Activated CD8-positive, alpha-beta T cell treated with anti-CD3 and anti-CD28 coated beads for 36 hours (primary cell): ENCODE measurements at regions of chr2 and their contacts with region 1.

Region 1: GRCh38 chr2:70919672-70920366 is 15.9 kb upstream of the ATP6V1B1 start:
- DNase-seq: peak; percentile 84
- ATAC-seq: peak; percentile 90
- H3K4me3 Mint-ChIP-seq: no peak overlapping the region
- H3K27ac Mint-ChIP-seq: no peak overlapping the region
- H3K4me1 Mint-ChIP-seq: no peaks in the 10 kb centered on the region
- H3K27me3 Mint-ChIP-seq: peaks cover 17% of the 10 kb centered on the region
- CTCF ChIP-seq: peak; percentile 90

Region 2: DNA sequence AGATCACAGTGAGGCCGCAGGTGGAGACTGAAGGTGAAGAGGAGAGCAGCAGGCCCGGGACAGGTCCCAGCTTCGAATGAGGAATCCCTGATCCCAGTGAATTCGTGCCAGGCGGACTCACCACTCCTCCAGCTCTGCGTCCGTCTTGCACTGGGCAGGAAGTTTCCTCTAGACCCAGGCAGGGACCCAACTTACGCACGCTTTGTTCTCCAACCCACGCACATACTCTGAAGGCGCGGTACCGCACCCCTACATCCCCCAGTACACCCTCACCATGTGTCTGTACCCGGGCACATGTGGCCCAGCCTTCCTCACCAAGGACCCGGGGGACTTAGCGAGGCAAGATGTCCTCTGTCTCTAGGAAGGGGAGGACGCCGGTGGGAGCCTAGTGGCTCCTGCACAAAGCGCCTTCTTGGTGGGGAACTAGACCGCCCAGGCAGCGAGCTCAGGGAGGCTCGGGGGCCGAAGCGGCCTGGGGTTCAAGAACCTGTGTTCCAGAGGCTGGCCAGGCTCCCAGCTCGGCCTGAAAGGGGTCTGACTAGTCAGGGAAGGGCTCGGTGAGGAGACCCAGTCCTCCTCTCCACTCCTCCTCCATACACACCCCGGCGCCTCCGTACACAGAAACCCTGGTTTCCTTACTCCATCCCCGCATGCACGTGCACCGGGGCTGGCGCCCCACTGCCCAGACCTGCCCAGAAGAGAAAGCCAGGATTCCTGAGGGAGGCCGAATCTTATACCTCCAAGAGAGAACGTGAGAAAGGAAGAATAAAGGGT is 22.4 kb before region 1 on chr2:
- CTCF ChIA-PET with region 1: interaction called, 11 read pairs
- POLR2A ChIA-PET with region 1: no interaction called
- intact Hi-C with region 1: no loop called
- DNase-seq: no peak
- ATAC-seq: peak; percentile 21
- H3K4me3 Mint-ChIP-seq: no peak overlapping the region
- H3K27ac Mint-ChIP-seq: no peak overlapping the region
- H3K4me1 Mint-ChIP-seq: peaks cover 14% of the 10 kb centered on the region
- H3K27me3 Mint-ChIP-seq: peaks cover 84% of the 10 kb centered on the region
- CTCF ChIP-seq: no peak

Region 3: DNA sequence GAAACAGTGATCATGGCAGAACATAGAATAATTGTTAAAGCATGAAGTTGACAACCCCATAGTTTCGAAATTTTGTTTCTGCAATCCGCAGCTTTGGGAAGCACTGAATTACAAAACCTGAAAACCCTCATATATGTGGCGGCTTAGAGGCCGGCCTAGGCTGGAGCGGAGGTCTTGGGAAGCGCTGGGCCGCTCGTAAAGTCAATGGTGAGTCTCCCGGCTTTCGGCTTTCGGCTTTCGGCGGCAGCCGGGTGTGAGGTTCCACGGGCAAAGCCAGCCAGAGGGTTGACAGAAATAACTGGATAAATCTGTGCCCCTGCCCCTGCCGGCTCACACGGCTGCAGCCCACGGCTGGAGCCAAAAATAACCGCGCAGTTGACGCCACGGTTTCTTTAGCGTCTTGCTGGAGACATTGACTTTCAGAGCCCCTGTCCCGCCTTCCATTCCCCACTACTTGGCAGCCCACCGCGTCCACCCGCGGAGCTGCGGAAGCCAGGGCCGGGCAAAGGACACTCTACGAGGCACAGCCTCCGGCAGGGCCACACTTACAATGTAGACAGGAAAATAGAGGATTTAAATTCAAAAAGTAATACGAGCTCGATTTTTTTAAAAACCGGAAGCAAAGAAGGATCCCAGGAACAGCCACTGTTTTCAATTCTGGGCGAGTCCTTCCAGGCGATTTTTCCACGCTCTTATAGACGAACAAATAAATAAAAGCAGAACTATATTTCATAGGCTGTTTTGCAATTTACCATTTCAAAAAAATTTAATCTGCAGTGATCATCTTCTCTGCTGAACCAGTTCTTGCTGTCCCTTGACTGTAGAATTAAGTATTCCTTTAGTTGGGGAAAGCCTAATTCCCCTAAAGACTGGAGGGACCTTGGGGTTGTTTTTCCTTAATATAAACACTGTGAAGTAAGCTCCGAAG is 12.4 kb before region 1 on chr2:
- CTCF ChIA-PET with region 1: interaction called, 12 read pairs
- POLR2A ChIA-PET with region 1: no interaction called
- intact Hi-C with region 1: no loop called
- DNase-seq: no peak
- ATAC-seq: no peak
- H3K4me3 Mint-ChIP-seq: peak overlapping the region; percentile 54
- H3K27ac Mint-ChIP-seq: no peak overlapping the region
- H3K4me1 Mint-ChIP-seq: peaks cover 10% of the 10 kb centered on the region
- H3K27me3 Mint-ChIP-seq: peaks cover 73% of the 10 kb centered on the region
- CTCF ChIP-seq: no peak

Region 4: GRCh38 chr2:70935468-70936164 is 15.8 kb after region 1 on chr2 and contains the start of gene ATP6V1B1:
- CTCF ChIA-PET with region 1: interaction called, 10 read pairs
- POLR2A ChIA-PET with region 1: interaction called, 5 read pairs
- intact Hi-C with region 1: no loop called
- DNase-seq: no peak
- ATAC-seq: no peak
- H3K4me3 Mint-ChIP-seq: no peak within 1 kb of the TSS
- H3K27ac Mint-ChIP-seq: no peak within 1 kb of the TSS
- H3K4me1 Mint-ChIP-seq: no peaks in the 10 kb centered on the region
- H3K27me3 Mint-ChIP-seq: peaks cover 13% of the 10 kb centered on the region
- CTCF ChIP-seq: no peak
- total RNA-seq, gene ATP6V1B1: not detected

Region 5: DNA sequence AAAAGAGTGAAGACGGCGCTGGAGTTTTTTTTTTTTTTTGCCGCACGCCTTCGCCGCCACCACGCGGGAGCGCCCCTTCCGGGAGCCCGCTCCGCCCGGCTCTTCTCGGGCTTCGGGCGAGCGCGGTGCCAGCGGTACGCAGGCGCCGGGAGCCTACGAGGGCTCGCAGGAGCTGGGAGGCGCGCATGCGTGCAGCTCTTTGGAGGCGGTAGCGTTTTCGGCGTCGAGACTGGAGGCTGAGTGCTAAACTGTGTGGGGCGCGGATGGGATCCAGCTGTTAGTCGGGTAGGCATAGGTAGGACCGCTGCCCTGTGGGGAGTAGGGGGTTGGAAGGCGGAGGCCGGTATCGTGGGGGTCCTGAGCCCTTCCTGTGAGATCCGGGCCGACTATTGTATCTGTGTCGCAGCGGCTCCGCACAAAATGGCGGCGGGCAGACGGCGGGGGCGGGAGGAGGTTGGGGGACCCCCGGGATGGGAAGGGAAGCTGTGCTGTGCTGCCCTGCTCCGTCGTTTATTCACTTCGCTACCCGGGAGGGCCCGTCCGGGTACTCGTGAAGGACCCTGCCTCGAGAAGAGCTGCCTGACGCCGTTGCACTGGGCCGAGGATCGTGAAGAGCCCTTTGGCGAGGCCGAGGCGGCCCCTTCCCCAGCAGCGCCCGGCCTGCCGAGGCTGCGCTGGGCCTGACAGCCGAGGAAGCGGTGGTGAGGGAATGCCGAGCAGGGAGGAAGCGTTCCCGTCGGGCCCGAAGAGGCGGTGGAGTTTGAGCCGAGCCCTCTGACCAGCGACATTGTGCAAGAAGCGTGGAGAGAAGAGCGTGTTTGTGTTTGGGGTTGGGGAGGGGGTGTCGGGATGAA is 412.0 kb after region 1 on chr2 and contains the start of gene ZNF638:
- CTCF ChIA-PET with region 1: no interaction called
- POLR2A ChIA-PET with region 1: no interaction called
- intact Hi-C with region 1: no loop called
- DNase-seq: peak; percentile 94
- ATAC-seq: peak; percentile 99
- H3K4me3 Mint-ChIP-seq: peak within 1 kb of the TSS; percentile 93
- H3K27ac Mint-ChIP-seq: peak within 1 kb of the TSS; percentile 99
- H3K4me1 Mint-ChIP-seq: peaks cover 26% of the 10 kb centered on the region
- H3K27me3 Mint-ChIP-seq: no peaks in the 10 kb centered on the region
- CTCF ChIP-seq: peak; percentile 76
- total RNA-seq, gene ZNF638: 81.1 to 86.0 TPM